ENCODE measurements at regions of chr3 and their contacts with region 1.

Region 1: GRCh38 chr3:61561374-61562041 is at the start of gene PTPRG:
- DNase-seq: peak; percentile 87 to 92
- ATAC-seq: peak; percentile 76 to 89 (median 80)
- H3K4me3 ChIP-seq: peak within 1 kb of the TSS; percentile 73 to 96 (median 90)
- H3K27ac ChIP-seq: peak within 1 kb of the TSS; percentile 89 to 99 (median 97)
- H3K4me1 ChIP-seq: peaks cover 5 to 40% (median 29%) of the 10 kb centered on the region in 9 donors
- H3K27me3 ChIP-seq: peaks cover 0 to 72% (median 0%) of the 10 kb centered on the region in 7 donors
- CTCF ChIP-seq: no peak
- total RNA-seq, gene PTPRG: 25.8 to 38.3 (median 33.1) TPM

Region 2: DNA sequence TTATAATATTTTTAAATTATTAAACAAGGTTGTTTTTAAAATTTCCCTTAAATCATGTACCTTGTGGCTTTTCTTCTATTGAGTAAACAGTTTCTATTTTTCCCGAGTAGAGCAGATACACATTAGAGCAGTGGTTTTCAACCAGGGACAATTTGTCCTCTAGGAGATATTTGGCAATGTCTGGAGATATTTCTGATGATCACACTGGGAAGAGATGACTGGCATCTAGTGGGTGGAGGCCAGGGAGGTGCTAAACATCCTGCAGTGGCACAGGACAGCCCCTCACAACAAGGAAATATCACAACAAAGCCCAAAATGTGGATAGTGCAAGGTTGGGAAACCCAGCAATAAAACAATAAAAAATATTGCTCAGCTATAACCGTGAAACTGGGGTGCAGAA is 113.1 kb before region 1 on chr3:
- intact Hi-C with region 1: loop called in 1 of 10 experiments (anchors 10 kb)
- DNase-seq: peak in 1 of 2 donors; percentile 6
- ATAC-seq: peak in 7 of 8 donors; percentile 38 to 94 (median 69)
- H3K4me3 ChIP-seq: no peak overlapping the region
- H3K27ac ChIP-seq: peak overlapping the region in 5 of 10 donors; percentile 11 to 48 (median 27)
- H3K4me1 ChIP-seq: peaks cover 0 to 23% (median 10%) of the 10 kb centered on the region in 9 donors
- H3K27me3 ChIP-seq: no peaks in the 10 kb centered on the region
- CTCF ChIP-seq: no peak

Region 3: GRCh38 chr3:61664095-61664482 is 102.6 kb after region 1 on chr3:
- intact Hi-C with region 1: loop called in 1 of 10 experiments (anchors 10 kb)
- DNase-seq: no peak
- ATAC-seq: peak in 2 of 8 donors; percentile 41 to 70
- H3K4me3 ChIP-seq: no peak overlapping the region
- H3K27ac ChIP-seq: no peak overlapping the region
- H3K4me1 ChIP-seq: peaks cover 5 to 57% (median 42%) of the 10 kb centered on the region in 9 donors
- H3K27me3 ChIP-seq: no peaks in the 10 kb centered on the region
- CTCF ChIP-seq: no peak

Region 4: DNA sequence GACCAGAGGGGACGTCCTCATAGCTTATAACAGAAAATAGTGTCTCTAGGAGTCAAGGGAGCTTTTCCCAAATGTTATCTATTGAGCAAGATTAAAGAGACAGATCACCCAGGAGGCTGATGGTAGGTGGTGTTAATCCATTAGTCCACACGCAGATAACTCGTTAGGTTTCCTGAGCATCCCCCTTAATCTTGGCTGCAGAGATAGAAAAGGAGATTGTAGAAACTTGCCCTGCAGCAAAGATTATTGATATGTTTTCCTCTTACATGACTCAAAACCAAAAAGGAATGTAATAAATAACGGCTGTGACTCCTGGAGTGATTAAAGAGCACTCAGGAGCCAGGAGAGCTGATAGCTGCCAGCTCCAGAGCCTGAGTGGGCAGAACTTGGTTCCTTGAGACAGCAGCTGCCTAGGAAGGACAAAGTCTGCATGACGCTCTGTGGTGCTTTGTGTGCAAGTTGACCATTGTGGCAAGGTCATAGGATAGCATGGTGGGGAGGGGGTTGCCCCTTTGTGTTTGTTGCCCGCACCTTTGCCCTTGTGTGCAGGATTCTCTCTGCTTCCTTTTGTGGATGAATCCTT is 234.7 kb after region 1 on chr3:
- intact Hi-C with region 1: no loop called
- DNase-seq: no peak
- ATAC-seq: peak in 2 of 8 donors; percentile 36 to 37
- H3K4me3 ChIP-seq: no peak overlapping the region
- H3K27ac ChIP-seq: no peak overlapping the region
- H3K4me1 ChIP-seq: peaks cover 0 to 42% (median 17%) of the 10 kb centered on the region in 9 donors
- H3K27me3 ChIP-seq: no peaks in the 10 kb centered on the region
- CTCF ChIP-seq: no peak

Region 5: DNA sequence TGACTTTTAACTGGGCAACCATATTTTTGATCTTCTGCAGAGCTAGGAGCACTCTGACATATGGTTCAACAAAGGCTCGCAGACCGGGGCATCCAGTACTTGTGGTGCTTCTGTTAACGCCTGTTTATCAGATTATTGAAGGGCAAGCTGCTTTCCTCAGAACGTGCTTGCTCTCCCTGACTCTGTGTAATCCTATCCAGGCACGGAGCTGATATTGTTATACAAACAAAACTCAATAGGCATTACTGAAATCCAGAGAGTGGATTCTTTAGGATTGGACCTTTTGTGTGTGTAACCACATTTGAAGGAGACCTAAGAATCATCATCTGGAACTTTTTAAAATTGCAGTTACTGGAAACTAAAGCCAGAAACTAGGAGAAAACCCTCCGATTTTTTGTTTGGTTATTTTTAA is 246.4 kb after region 1 on chr3:
- intact Hi-C with region 1: loop called in 1 of 10 experiments (anchors 5 kb)
- DNase-seq: peak in 1 of 2 donors; percentile 17
- ATAC-seq: peak in 6 of 8 donors; percentile 38 to 67 (median 53)
- H3K4me3 ChIP-seq: no peak overlapping the region
- H3K27ac ChIP-seq: peak overlapping the region; percentile 48 to 84 (median 74)
- H3K4me1 ChIP-seq: peaks cover 50 to 100% (median 89%) of the 10 kb centered on the region in 9 donors
- H3K27me3 ChIP-seq: no peaks in the 10 kb centered on the region
- CTCF ChIP-seq: no peak

Region 6: DNA sequence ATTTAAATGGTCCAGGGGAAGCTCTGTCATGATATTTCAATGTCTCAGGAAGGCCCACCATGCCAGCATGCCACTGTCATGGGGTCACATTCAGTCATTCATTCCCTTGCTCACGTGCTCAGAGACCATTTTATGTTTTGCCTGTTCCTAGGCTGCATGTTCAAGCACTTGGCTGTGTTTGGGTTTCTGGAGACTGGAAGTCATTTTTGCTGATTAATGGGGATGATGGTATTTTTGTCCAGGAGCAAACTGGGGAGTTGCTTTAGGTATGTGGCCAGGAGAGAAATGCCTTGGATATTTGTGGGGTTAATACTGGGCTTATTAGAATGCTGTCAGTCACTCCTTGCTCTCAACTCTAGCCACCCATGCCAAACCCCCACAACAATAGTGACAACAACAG is 303.4 kb after region 1 on chr3:
- intact Hi-C with region 1: loop called in 1 of 10 experiments (anchors 10 kb)
- DNase-seq: no peak
- ATAC-seq: no peak
- H3K4me3 ChIP-seq: no peak overlapping the region
- H3K27ac ChIP-seq: no peak overlapping the region
- H3K4me1 ChIP-seq: peaks cover 11 to 67% (median 38%) of the 10 kb centered on the region in 9 donors
- H3K27me3 ChIP-seq: no peaks in the 10 kb centered on the region
- CTCF ChIP-seq: no peak

Region 7: DNA sequence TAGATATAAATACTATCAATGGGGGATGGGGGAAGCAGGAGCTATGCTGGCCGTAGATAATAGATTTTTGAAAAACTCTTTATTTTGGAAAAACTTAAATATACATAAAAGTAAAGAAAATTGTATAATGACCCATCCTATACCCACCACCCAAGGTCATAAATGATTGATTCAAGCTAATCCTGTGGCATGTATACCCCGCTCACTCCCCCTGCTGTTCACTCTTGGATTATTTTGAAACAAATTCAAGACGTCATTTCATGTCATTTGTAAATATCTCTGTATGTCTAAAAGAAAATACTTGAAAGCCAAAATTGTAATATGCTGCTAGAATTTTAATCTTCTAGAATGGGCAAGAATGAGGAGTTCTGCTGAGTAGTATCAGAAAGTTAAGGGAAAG is 570.1 kb after region 1 on chr3:
- intact Hi-C with region 1: loop called in 2 of 10 experiments (anchors 5 to 10 kb)
- DNase-seq: no peak
- ATAC-seq: no peak
- H3K4me3 ChIP-seq: no peak overlapping the region
- H3K27ac ChIP-seq: no peak overlapping the region
- H3K4me1 ChIP-seq: peaks cover 10 to 46% (median 33%) of the 10 kb centered on the region in 9 donors
- H3K27me3 ChIP-seq: no peaks in the 10 kb centered on the region
- CTCF ChIP-seq: peak in 7 of 9 donors; percentile 20 to 63 (median 49)